Gastrocnemius medialis (tissue), 4 donors: ENCODE measurements at regions of chr14 and their contacts with region 1.

Region 1: DNA sequence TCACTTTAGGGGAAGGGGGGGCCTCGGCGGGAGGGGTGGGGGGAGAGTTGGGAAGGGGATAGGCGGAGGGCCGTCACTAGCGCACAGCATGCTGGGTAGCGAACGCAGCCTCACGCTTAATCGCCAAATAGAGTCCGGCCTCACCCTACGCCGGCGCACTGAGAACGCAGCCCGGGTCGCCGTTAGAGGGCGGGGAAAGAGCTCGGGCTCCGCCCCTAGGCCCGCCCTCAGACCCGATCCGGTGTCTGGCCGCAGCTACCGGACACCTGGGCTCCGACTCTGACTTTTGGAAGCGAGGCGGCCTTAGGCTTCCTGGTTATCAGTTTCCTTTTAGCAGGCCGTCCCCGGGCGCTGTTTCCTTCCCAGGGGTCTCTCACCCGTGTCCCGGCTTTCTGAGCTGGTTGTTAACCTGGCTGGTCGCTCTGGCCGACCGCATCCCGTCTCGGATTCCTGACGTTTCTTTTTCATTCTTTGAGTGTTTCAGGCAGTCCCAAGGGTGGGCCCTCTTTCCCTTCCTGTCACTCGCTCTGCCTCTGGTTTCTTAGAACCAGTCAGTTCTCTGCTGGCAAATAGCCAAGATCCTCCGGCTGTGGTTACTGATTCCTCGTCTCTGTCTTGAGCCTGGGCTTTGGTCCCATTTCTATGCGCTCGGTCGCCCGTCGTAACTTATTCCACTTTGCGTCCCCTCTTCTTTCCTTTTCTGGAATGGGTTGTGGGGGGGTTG is 378 bp upstream of the STRN3 start:
- DNase-seq: peak; percentile 96 to 98
- ATAC-seq: peak; percentile 86 to 94
- H3K4me3 ChIP-seq: peak overlapping the region; percentile 90 to 98 (median 92)
- H3K27ac ChIP-seq: peak overlapping the region; percentile 95 to 100 (median 100)
- H3K4me1 ChIP-seq: peaks cover 28 to 29% of the 10 kb centered on the region in 2 donors
- H3K27me3 ChIP-seq: no peaks in the 10 kb centered on the region
- CTCF ChIP-seq: peak in 2 of 5 experiments; percentile 6 to 9
- POLR2A ChIP-seq: peak; percentile 58 to 85

Region 2: DNA sequence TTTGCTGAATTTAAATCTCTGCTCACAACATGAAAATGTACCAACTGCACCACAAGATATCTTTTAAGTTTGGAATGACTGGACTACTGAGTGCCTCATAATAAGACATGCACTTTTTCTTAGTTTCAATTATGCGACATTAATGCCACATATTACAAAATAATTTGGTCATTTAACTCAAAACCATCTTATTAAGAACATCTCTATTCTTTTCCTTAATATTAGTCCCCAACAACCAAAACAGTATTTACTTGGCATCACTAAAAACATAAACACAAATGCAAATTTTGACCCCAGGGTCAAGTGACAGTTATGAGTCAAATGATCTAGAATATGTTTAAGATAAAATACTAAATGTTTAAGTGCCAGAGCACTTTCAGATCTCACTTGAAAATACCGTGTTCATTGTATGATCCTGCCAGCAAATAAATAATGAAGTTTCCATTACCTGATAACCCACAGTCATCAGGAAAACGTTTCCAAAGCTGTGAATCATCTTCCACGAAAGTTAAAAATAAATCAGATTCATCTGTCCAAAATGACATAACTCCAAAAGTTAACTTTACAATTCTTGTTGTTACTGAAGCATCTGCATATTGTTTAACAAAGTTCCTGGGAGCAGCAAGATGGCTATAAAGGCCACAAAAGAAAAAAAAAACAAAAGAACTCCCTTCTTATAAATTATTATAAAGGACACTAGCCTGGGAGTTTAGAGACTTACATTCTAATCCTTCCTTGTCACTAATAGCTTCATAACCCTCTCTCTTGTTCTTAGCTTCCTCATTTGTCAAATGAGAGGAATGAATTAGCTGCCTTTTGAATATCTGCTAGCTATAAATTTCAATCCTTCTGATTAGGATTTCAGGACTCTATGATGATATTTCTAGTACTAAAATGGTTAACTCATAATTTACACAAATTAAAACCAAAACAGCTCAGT is 31.6 kb before region 1 on chr14:
- in situ Hi-C with region 1: no loop called
- intact Hi-C with region 1: loop called (anchors 2 kb)
- DNase-seq: no peak
- ATAC-seq: peak; percentile 77 to 81
- H3K4me3 ChIP-seq: peak overlapping the region in 3 of 4 donors; percentile 2 to 22 (median 8)
- H3K27ac ChIP-seq: peak overlapping the region; percentile 66 to 80 (median 79)
- H3K4me1 ChIP-seq: peaks cover 40 to 51% of the 10 kb centered on the region in 2 donors
- H3K27me3 ChIP-seq: no peaks in the 10 kb centered on the region
- CTCF ChIP-seq: no peak
- POLR2A ChIP-seq: no peak

Region 3: DNA sequence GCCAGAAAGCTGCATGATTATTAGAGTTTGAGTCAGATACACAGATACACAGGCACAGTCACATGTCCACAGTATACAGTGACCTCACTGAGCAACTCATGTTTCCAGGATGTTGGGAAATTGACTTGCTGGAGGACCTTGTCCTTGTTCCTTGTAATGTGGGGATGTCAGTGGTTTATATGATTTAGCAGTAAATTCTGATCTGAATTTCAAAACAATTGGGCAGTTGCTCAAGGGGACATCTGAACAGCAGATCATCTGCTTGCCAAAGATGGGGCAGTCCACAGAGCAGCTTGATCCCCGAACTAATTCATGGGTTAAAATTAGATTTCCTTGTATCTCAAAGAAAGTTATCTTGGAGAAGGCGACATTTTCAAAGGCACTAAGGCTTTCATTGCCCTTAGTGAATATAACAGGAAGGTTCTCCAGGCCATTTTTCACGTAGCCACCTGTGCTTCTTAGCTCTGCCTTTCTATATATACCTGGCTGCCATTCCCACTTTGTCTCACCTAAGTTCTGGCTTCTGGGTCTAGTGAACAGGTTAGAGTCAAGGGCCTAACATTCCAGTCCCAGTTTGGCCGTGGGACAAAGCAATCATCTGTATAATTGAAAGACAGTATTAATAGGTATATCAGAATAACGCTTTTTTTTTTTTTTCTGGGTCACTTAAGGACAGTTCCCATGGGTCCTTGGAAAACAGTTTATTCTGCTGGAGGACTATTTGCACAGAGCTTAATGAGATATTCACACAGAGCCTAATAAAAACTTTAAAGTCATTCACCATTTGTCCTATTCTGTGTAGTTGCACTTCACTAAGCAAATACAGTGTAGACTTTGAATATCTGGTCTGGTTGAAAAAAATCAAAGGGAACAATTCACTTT is 64.6 kb after region 1 on chr14:
- in situ Hi-C with region 1: no loop called
- intact Hi-C with region 1: loop called (anchors 2 kb)
- DNase-seq: peak; percentile 79 to 80
- ATAC-seq: peak; percentile 94 to 97
- H3K4me3 ChIP-seq: peak overlapping the region in 1 of 4 donors; percentile 20
- H3K27ac ChIP-seq: peak overlapping the region; percentile 84 to 95 (median 92)
- H3K4me1 ChIP-seq: peaks cover 22 to 30% of the 10 kb centered on the region in 2 donors
- H3K27me3 ChIP-seq: no peaks in the 10 kb centered on the region
- CTCF ChIP-seq: no peak
- POLR2A ChIP-seq: peak; percentile 17 to 52